ENCODE measurements at regions of chr6 and their contacts with region 1.

Region 1: DNA sequence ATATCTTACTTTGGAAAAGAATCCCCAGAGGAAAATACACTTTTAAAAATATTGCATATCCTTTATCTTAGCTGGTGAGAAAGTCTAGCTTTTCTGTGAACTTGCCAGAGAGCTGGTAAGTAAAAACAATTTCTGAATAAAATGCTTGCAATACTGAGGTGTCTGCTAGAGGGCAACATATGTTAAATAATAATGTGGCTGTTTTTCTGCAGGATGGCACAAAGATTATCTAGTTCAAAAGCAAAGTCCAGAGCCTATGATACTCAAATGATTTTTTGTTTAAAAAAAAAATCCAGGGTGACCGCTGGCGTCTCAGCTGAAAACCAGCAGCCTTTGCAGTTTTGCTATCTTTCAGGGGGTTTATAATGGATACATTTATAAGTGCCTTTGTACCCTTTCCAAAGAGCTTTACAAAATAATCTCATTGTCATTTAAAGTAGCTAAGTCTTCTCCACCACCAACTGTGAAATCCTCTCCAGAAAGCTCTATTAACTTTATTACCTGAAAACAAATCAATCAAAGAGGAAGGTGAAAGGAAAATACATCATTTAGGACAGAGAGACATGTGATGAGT is 194.9 kb downstream of the PHACTR1 start:
- DNase-seq: peak; percentile 26
- CTCF ChIP-seq: peak; percentile 59

Region 2: GRCh38 chr6:13328076-13328874 is 416.8 kb after region 1 on chr6 and contains the start of gene TBC1D7:
- in situ Hi-C with region 1: loop called (anchors 25 kb)
- DNase-seq: peak; percentile 92
- CTCF ChIP-seq: no peak

Region 3: GRCh38 chr6:13538084-13538483 is 626.6 kb after region 1 on chr6:
- in situ Hi-C with region 1: loop called (anchors 25 kb)
- DNase-seq: peak; percentile 75
- CTCF ChIP-seq: peak; percentile 33